Activated naive CD4-positive, alpha-beta T cell treated with anti-CD3 and anti-CD28 coated beads for 36 hours (primary cell): ENCODE measurements at regions of chr9 and their contacts with region 1.

Region 1: GRCh38 chr9:97710356-97711222 is 13.4 kb upstream of the XPA start:
- DNase-seq: peak; percentile 64
- H3K4me3 Mint-ChIP-seq: no peak overlapping the region
- H3K27ac Mint-ChIP-seq: no peak overlapping the region
- H3K4me1 Mint-ChIP-seq: peaks cover 20% of the 10 kb centered on the region
- H3K27me3 Mint-ChIP-seq: peaks cover 4% of the 10 kb centered on the region

Region 2: GRCh38 chr9:97431549-97432143 is 278.9 kb before region 1 on chr9:
- CTCF ChIA-PET with region 1: no interaction called
- intact Hi-C with region 1: no loop called
- DNase-seq: no peak
- H3K4me3 Mint-ChIP-seq: no peak overlapping the region
- H3K27ac Mint-ChIP-seq: no peak overlapping the region
- H3K4me1 Mint-ChIP-seq: no peaks in the 10 kb centered on the region
- H3K27me3 Mint-ChIP-seq: no peaks in the 10 kb centered on the region

Region 3: GRCh38 chr9:97853844-97854695 is 143.5 kb after region 1 on chr9:
- CTCF ChIA-PET with region 1: interaction called, 3 read pairs
- intact Hi-C with region 1: loop called (anchors 1 kb)
- DNase-seq: peak; percentile 78
- H3K4me3 Mint-ChIP-seq: peak overlapping the region; percentile 87
- H3K27ac Mint-ChIP-seq: peak overlapping the region; percentile 16
- H3K4me1 Mint-ChIP-seq: peaks cover 36% of the 10 kb centered on the region
- H3K27me3 Mint-ChIP-seq: peaks cover 74% of the 10 kb centered on the region

Region 4: GRCh38 chr9:97900738-97901565 is 190.4 kb after region 1 on chr9:
- CTCF ChIA-PET with region 1: interaction called, 9 read pairs
- intact Hi-C with region 1: loop called (anchors 1 kb)
- DNase-seq: peak; percentile 52
- H3K4me3 Mint-ChIP-seq: no peak overlapping the region
- H3K27ac Mint-ChIP-seq: no peak overlapping the region
- H3K4me1 Mint-ChIP-seq: peaks cover 59% of the 10 kb centered on the region
- H3K27me3 Mint-ChIP-seq: no peaks in the 10 kb centered on the region

Region 5: DNA sequence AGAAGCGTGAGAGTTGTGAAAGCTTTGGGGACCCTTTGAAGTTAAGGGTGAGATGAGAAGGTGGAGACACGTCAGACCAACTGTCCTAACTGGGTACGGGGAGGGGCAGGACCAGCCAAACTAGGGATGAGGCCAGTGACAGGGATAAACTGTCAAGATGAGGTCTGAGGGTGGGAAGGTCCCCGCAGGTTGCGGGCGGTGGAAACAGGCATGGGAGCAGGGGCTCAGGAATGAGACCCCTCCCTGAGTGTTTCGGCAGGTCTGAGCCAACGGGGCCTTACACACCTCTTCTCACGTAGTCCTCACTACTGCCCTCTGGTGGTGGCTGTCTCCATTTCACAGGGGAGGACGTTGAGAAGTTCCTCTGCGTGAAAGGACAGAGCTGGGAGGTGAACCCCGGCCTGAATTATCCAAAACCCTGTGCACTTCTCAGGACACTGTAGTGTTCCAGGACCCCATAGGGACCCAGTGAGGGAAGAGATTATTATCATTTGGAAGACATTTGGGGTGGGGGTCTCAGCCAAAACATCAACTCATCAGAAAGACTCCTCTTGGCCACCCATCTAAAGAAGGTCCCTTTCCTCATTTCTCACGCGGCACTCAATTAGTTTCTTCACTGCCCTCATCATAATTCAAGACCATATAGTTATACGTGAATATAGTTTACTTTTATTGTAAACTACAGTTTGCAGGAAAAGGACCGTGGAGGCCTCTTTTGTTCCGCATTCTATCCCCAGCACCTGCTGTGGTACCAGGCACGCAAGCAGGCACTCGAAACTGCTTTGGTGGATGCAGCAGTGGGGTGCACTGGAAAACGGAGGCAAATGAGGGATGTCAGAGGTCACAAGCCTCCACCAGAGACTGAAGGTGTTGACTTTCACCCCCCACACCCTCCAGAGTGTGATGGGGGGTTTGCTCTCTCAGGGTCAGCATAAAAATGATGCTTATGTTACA is 324.3 kb after region 1 on chr9:
- CTCF ChIA-PET with region 1: no interaction called
- intact Hi-C with region 1: loop called (anchors 1 kb)
- DNase-seq: peak; percentile 97
- H3K4me3 Mint-ChIP-seq: peak overlapping the region; percentile 33
- H3K27ac Mint-ChIP-seq: no peak overlapping the region
- H3K4me1 Mint-ChIP-seq: peaks cover 15% of the 10 kb centered on the region
- H3K27me3 Mint-ChIP-seq: no peaks in the 10 kb centered on the region